ENCODE measurements at regions of chr2 and their contacts with region 1.

Region 1: DNA sequence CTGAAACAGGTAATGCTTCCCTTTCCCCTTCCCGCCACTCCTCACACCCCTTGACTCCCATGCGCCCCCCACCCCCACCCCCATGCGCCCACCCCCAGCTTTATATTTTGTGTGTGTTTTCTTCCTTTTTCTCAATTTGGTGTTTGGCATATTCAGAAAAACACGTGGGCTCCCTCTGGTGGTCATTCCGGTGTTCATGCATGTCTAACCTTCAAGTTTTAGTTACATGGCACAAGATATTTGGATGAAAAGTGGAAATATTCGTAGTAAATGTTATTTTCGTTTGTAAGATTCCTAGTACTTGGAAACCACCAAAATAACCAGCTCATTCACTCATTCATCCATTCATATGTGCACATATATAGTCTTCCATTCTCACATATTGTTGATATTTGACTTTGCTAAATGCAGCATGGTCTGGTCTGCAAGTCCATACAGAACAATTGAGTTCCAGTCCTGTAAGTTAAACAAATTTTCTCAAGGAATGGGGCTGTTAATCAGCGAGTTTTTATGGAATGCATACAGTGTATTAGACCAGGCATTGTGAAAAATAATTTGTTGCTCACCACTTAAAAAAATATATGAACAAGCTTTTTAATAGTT is 143.6 kb upstream of the MAP3K20 start:
- DNase-seq: peak; percentile 81
- H3K4me3 ChIP-seq: peak overlapping the region in 1 of 3 experiments; percentile 25
- H3K27ac ChIP-seq: peak overlapping the region; percentile 94
- H3K4me1 ChIP-seq: peaks cover 39% of the 10 kb centered on the region
- H3K27me3 ChIP-seq: no peaks in the 10 kb centered on the region
- CTCF ChIP-seq: peak; percentile 39 to 62
- POLR2A ChIP-seq: no peak

Region 2: GRCh38 chr2:172588931-172589330 is 343.1 kb before region 1 on chr2:
- CTCF ChIA-PET with region 1: no interaction called
- POLR2A ChIA-PET with region 1: no interaction called
- dilution Hi-C with region 1: no loop called
- intact Hi-C with region 1: no loop called
- DNase-seq: no peak
- H3K4me3 ChIP-seq: no peak overlapping the region
- H3K27ac ChIP-seq: no peak overlapping the region
- H3K4me1 ChIP-seq: no peaks in the 10 kb centered on the region
- H3K27me3 ChIP-seq: no peaks in the 10 kb centered on the region
- CTCF ChIP-seq: no peak
- POLR2A ChIP-seq: no peak

Region 3: DNA sequence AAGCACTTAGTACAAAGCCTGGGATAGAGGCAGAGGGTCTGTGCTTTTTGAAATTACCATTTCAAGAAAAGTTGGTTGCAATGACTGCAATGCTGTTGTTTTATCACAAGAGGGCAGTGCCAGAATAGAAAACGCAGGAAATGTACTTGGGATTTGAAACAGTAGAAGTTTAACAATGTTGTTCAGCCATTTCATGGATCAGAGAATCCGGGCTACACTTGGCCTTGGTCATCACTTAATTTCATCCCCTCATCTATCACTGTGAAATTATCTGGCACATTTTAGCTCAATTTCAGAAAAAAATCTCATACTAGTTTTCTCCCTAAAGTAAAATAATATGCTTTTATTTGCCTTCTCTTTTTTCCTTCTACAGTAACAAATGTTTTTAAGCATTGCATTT is 125.5 kb before region 1 on chr2:
- CTCF ChIA-PET with region 1: interaction called, 108 read pairs
- POLR2A ChIA-PET with region 1: no interaction called
- dilution Hi-C with region 1: no loop called
- intact Hi-C with region 1: loop called (anchors 1 kb)
- DNase-seq: peak; percentile 54
- H3K4me3 ChIP-seq: no peak overlapping the region
- H3K27ac ChIP-seq: no peak overlapping the region
- H3K4me1 ChIP-seq: no peaks in the 10 kb centered on the region
- H3K27me3 ChIP-seq: no peaks in the 10 kb centered on the region
- CTCF ChIP-seq: peak; percentile 65 to 79
- POLR2A ChIP-seq: no peak

Region 4: GRCh38 chr2:172821370-172822347 is 110.4 kb before region 1 on chr2:
- CTCF ChIA-PET with region 1: interaction called, 28 read pairs
- POLR2A ChIA-PET with region 1: no interaction called
- dilution Hi-C with region 1: no loop called
- intact Hi-C with region 1: no loop called
- DNase-seq: peak; percentile 92
- H3K4me3 ChIP-seq: peak overlapping the region in 2 of 3 experiments; percentile 29 to 60
- H3K27ac ChIP-seq: peak overlapping the region; percentile 80
- H3K4me1 ChIP-seq: peaks cover 18% of the 10 kb centered on the region
- H3K27me3 ChIP-seq: no peaks in the 10 kb centered on the region
- CTCF ChIP-seq: no peak
- POLR2A ChIP-seq: peak; percentile 38

Region 5: GRCh38 chr2:172864182-172864581 is 67.8 kb before region 1 on chr2:
- CTCF ChIA-PET with region 1: interaction called, 91 read pairs
- POLR2A ChIA-PET with region 1: no interaction called
- dilution Hi-C with region 1: no loop called
- intact Hi-C with region 1: loop called (anchors 1 kb)
- DNase-seq: peak; percentile 29
- H3K4me3 ChIP-seq: no peak overlapping the region
- H3K27ac ChIP-seq: no peak overlapping the region
- H3K4me1 ChIP-seq: peaks cover 20% of the 10 kb centered on the region
- H3K27me3 ChIP-seq: no peaks in the 10 kb centered on the region
- CTCF ChIP-seq: peak; percentile 66 to 68
- POLR2A ChIP-seq: no peak

Region 6: GRCh38 chr2:172878260-172878659 is 53.8 kb before region 1 on chr2:
- CTCF ChIA-PET with region 1: interaction called, 14 read pairs
- POLR2A ChIA-PET with region 1: no interaction called
- dilution Hi-C with region 1: no loop called
- intact Hi-C with region 1: no loop called
- DNase-seq: peak; percentile 33
- H3K4me3 ChIP-seq: no peak overlapping the region
- H3K27ac ChIP-seq: no peak overlapping the region
- H3K4me1 ChIP-seq: no peaks in the 10 kb centered on the region
- H3K27me3 ChIP-seq: peaks cover 0 to 3% of the 10 kb centered on the region in 2 experiments
- CTCF ChIP-seq: no peak
- POLR2A ChIP-seq: no peak

Region 7: GRCh38 chr2:172962824-172963223 is 30.8 kb after region 1 on chr2:
- CTCF ChIA-PET with region 1: interaction called, 54 read pairs
- POLR2A ChIA-PET with region 1: no interaction called
- dilution Hi-C with region 1: no loop called
- intact Hi-C with region 1: loop called (anchors 1 kb)
- DNase-seq: peak; percentile 94
- H3K4me3 ChIP-seq: no peak overlapping the region
- H3K27ac ChIP-seq: peak overlapping the region; percentile 88
- H3K4me1 ChIP-seq: peaks cover 35% of the 10 kb centered on the region
- H3K27me3 ChIP-seq: no peaks in the 10 kb centered on the region
- CTCF ChIP-seq: no peak
- POLR2A ChIP-seq: no peak

Region 8: DNA sequence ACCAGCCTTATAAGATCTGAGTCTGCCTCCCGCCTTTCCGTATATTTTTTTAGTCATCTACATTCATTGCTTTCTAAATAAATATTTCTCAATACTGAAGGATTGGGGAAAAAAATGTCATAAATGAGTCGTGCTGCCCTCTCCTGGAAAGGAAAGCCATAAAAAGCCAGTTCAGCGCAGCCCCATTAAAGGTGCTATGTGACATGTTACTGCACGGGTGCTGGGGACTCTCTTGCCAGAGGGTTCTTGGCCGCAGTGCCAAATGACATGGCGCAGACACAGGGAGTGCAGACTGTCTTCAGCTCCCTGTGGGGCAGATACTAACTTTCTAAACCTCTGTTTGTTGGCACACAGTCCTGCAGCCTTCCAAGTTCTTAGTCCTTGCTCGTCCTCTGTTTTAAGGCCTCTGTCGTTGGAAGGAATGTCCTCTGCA is 89.9 kb after region 1 on chr2:
- CTCF ChIA-PET with region 1: interaction called, 34 read pairs
- POLR2A ChIA-PET with region 1: no interaction called
- dilution Hi-C with region 1: no loop called
- intact Hi-C with region 1: loop called (anchors 2 kb)
- DNase-seq: peak; percentile 18
- H3K4me3 ChIP-seq: no peak overlapping the region
- H3K27ac ChIP-seq: no peak overlapping the region
- H3K4me1 ChIP-seq: no peaks in the 10 kb centered on the region
- H3K27me3 ChIP-seq: peaks cover 0 to 2% of the 10 kb centered on the region in 2 experiments
- CTCF ChIP-seq: peak; percentile 8 to 23
- POLR2A ChIP-seq: no peak